Breast epithelium (tissue), 4 donors: ENCODE measurements at regions of chr12 and their contacts with region 1.

Region 1: DNA sequence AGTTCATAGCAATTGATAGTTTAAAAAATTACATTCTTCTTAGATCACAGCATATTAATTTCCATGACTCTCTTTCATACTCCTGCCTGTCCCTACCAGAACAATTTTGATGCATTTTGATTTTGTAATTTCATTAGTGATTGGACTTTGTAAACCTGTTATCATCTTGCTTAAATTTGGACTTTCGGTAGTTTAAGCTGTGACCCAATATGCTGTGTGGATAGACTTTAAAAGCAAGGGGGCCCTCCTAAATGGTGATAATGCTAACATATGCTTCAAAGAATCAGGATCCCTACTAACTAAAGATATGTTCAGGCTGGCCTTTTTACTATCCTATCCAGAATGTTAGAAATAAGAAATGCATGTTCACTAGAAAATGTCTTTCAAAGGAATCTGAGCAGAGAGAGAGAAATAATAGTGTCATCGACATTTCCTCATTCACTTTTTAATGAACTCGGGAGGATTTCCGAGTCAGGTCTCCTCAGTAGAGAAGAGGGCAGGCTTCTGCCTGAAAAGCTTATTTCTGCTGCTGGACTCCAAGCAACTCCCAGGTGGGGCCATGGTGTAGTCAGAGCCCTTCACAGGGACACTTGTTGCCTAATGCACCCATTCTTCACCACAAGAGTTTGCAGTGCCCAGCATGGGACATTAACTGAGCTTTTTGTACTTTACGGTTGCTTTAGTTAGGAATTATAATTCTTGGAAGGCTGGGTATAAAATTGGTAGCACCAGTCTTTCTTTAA is 16.7 kb downstream of the SLC38A4 start:
- DNase-seq: no peak
- H3K4me3 ChIP-seq: no peak overlapping the region
- H3K27ac ChIP-seq: no peak overlapping the region
- H3K4me1 ChIP-seq: no peaks in the 10 kb centered on the region
- H3K27me3 ChIP-seq: no peaks in the 10 kb centered on the region
- CTCF ChIP-seq: no peak
- POLR2A ChIP-seq: no peak

Region 2: DNA sequence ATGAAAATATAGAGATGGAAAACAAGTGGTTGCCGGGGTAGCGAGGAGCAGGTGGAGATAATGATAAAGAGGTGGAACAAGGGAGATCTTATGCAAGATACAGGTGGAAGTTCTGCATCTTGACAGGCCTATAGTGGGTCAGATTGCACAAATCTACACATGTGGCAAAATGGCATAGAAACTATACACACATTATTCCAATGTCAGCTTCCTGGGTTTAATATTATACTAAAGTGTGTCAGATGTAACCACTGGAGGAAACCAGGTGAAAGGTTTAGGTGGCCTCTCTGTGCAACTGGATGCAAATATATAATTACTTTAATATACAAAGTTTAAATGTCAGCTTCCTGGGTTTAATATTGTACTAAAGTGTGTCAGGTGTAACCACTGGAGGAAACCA is 15.6 kb after region 1 on chr12:
- intact Hi-C with region 1: no loop called
- DNase-seq: no peak
- H3K4me3 ChIP-seq: no peak overlapping the region
- H3K27ac ChIP-seq: no peak overlapping the region
- H3K4me1 ChIP-seq: no peaks in the 10 kb centered on the region
- H3K27me3 ChIP-seq: peaks cover 0 to 3% of the 10 kb centered on the region in 2 donors
- CTCF ChIP-seq: no peak
- POLR2A ChIP-seq: no peak

Region 3: DNA sequence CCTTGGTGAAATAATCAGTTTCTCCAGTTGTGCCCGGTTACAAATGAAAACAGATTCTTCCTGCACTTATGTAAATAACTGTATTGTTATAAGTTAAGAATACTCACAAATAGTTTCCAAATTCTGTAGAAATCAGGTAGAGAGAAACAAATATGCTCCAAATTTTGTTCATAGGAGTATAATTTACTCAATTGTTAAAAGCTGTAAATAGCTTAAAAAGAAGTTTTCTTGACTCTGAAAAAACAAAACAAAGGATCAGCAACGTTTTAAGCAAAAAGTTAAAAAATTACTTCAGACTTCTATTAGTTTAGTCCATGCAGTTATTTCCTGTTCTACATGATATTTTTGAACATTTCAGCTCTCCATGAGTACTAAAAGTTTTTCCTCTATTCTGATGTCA is 46.6 kb after region 1 on chr12:
- intact Hi-C with region 1: loop called (anchors 2 kb)
- DNase-seq: no peak
- H3K4me3 ChIP-seq: no peak overlapping the region
- H3K27ac ChIP-seq: no peak overlapping the region
- H3K4me1 ChIP-seq: no peaks in the 10 kb centered on the region
- H3K27me3 ChIP-seq: no peaks in the 10 kb centered on the region
- CTCF ChIP-seq: no peak
- POLR2A ChIP-seq: no peak